ENCODE measurements at regions of chr1 and their contacts with region 1.

Region 1: GRCh38 chr1:40951943-40952743 is 27.4 kb upstream of the CTPS1 start:
- DNase-seq: peak; percentile 65
- H3K4me3 Mint-ChIP-seq: no peak overlapping the region
- H3K27ac Mint-ChIP-seq: no peak overlapping the region
- H3K4me1 Mint-ChIP-seq: peaks cover 21% of the 10 kb centered on the region
- H3K27me3 Mint-ChIP-seq: peaks cover 16% of the 10 kb centered on the region

Region 2: GRCh38 chr1:40774266-40774998 is 177.7 kb before region 1 on chr1:
- CTCF ChIA-PET with region 1: interaction called, 148 read pairs
- POLR2A ChIA-PET with region 1: no interaction called
- DNase-seq: peak; percentile 63
- H3K4me3 Mint-ChIP-seq: no peak overlapping the region
- H3K27ac Mint-ChIP-seq: peak overlapping the region; percentile 2
- H3K4me1 Mint-ChIP-seq: peaks cover 16% of the 10 kb centered on the region
- H3K27me3 Mint-ChIP-seq: no peaks in the 10 kb centered on the region

Region 3: GRCh38 chr1:40825435-40825788 is 126.7 kb before region 1 on chr1:
- CTCF ChIA-PET with region 1: no interaction called
- POLR2A ChIA-PET with region 1: no interaction called
- DNase-seq: no peak
- H3K4me3 Mint-ChIP-seq: no peak overlapping the region
- H3K27ac Mint-ChIP-seq: no peak overlapping the region
- H3K4me1 Mint-ChIP-seq: peaks cover 18% of the 10 kb centered on the region
- H3K27me3 Mint-ChIP-seq: no peaks in the 10 kb centered on the region

Region 4: GRCh38 chr1:40868051-40868794 is 83.9 kb before region 1 on chr1:
- CTCF ChIA-PET with region 1: interaction called, 255 read pairs
- POLR2A ChIA-PET with region 1: interaction called, 3 read pairs
- DNase-seq: peak; percentile 26
- H3K4me3 Mint-ChIP-seq: no peak overlapping the region
- H3K27ac Mint-ChIP-seq: peak overlapping the region; percentile 68
- H3K4me1 Mint-ChIP-seq: peaks cover 50% of the 10 kb centered on the region
- H3K27me3 Mint-ChIP-seq: no peaks in the 10 kb centered on the region

Region 5: DNA sequence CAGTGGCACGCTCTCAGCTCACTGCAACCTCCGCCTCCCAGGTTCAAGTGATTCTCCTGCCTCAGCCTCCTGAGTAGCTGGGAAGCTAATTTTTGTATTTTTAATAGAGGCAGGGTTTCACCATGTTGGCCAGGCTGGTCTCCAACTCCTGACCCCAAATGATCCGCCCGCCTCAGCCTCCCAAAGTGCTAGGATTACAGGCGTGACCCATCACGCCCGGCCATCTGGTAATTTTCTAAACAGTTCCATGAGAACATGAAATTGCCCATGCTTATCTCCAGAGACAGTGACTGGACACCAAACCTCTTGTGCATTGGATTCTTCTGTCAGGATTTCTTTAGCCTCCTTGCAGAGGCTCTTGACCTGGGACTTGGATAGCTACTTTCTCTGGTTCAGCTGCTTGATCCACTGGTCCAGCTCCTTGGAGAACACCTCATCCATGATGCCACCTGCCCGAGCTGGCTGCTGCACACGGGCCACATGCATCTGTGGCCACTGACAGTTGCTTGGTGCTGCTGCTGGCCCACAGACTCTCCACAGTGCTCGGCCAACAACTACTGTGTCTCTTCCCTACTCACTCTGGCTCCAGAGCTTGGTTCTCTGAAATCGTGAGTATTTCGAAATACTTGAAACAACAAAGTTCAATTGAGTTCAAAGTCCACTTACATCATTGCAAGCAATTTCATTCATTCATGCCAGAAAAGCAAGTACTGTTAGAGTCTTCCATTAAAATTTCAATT is 12.7 kb before region 1 on chr1:
- CTCF ChIA-PET with region 1: interaction called, 49 read pairs
- POLR2A ChIA-PET with region 1: no interaction called
- DNase-seq: no peak
- H3K4me3 Mint-ChIP-seq: no peak overlapping the region
- H3K27ac Mint-ChIP-seq: no peak overlapping the region
- H3K4me1 Mint-ChIP-seq: no peaks in the 10 kb centered on the region
- H3K27me3 Mint-ChIP-seq: peaks cover 13% of the 10 kb centered on the region

Region 6: GRCh38 chr1:41200728-41201127 is 248.6 kb after region 1 on chr1:
- CTCF ChIA-PET with region 1: no interaction called
- POLR2A ChIA-PET with region 1: no interaction called
- DNase-seq: no peak
- H3K4me3 Mint-ChIP-seq: no peak overlapping the region
- H3K27ac Mint-ChIP-seq: no peak overlapping the region
- H3K4me1 Mint-ChIP-seq: no peaks in the 10 kb centered on the region
- H3K27me3 Mint-ChIP-seq: no peaks in the 10 kb centered on the region